Endothelial cell of umbilical vein (primary cell): ENCODE measurements at regions of chr13 and their contacts with region 1.

Region 1: GRCh38 chr13:106619688-106620555 is 52.0 kb upstream of the ARGLU1 start:
- DNase-seq: peak; percentile 61
- H3K4me3 ChIP-seq: no peak overlapping the region
- H3K27ac ChIP-seq: no peak overlapping the region
- H3K4me1 ChIP-seq: peaks cover 9% of the 10 kb centered on the region
- H3K27me3 ChIP-seq: peaks cover 18 to 31% of the 10 kb centered on the region in 2 experiments
- CTCF ChIP-seq: peak; percentile 79 to 80
- POLR2A ChIP-seq: no peak

Region 2: GRCh38 chr13:105894697-105895096 is 725.2 kb before region 1 on chr13:
- CTCF ChIA-PET with region 1: no interaction called
- POLR2A ChIA-PET with region 1: no interaction called
- dilution Hi-C with region 1: no loop called
- intact Hi-C with region 1: no loop called
- DNase-seq: no peak
- H3K4me3 ChIP-seq: no peak overlapping the region
- H3K27ac ChIP-seq: no peak overlapping the region
- H3K4me1 ChIP-seq: no peaks in the 10 kb centered on the region
- H3K27me3 ChIP-seq: no peaks in the 10 kb centered on the region
- CTCF ChIP-seq: no peak
- POLR2A ChIP-seq: no peak

Region 3: GRCh38 chr13:106471957-106472543 is 147.9 kb before region 1 on chr13:
- CTCF ChIA-PET with region 1: no interaction called
- POLR2A ChIA-PET with region 1: no interaction called
- dilution Hi-C with region 1: no loop called
- intact Hi-C with region 1: no loop called
- DNase-seq: peak; percentile 77
- H3K4me3 ChIP-seq: no peak overlapping the region
- H3K27ac ChIP-seq: no peak overlapping the region
- H3K4me1 ChIP-seq: peaks cover 8% of the 10 kb centered on the region
- H3K27me3 ChIP-seq: no peaks in the 10 kb centered on the region
- CTCF ChIP-seq: no peak
- POLR2A ChIP-seq: no peak

Region 4: GRCh38 chr13:106567474-106568298 is 52.2 kb before region 1 on chr13 and contains the start of gene ARGLU1:
- CTCF ChIA-PET with region 1: interaction called, 29 read pairs
- POLR2A ChIA-PET with region 1: no interaction called
- dilution Hi-C with region 1: no loop called
- intact Hi-C with region 1: loop called (anchors 1 kb)
- DNase-seq: peak; percentile 96
- H3K4me3 ChIP-seq: peak within 1 kb of the TSS; percentile 57 to 98 (median 79)
- H3K27ac ChIP-seq: peak within 1 kb of the TSS; percentile 85
- H3K4me1 ChIP-seq: peaks cover 26% of the 10 kb centered on the region
- H3K27me3 ChIP-seq: no peaks in the 10 kb centered on the region
- CTCF ChIP-seq: no peak
- POLR2A ChIP-seq: peak; percentile 92
- total RNA-seq, gene ARGLU1: 95.7 and 111 TPM in 2 replicates

Region 5: GRCh38 chr13:106630650-106631049 is 10.7 kb after region 1 on chr13:
- CTCF ChIA-PET with region 1: interaction called, 23 read pairs
- POLR2A ChIA-PET with region 1: no interaction called
- dilution Hi-C with region 1: no loop called
- intact Hi-C with region 1: no loop called
- DNase-seq: no peak
- H3K4me3 ChIP-seq: no peak overlapping the region
- H3K27ac ChIP-seq: no peak overlapping the region
- H3K4me1 ChIP-seq: no peaks in the 10 kb centered on the region
- H3K27me3 ChIP-seq: peaks cover 1 to 8% of the 10 kb centered on the region in 2 experiments
- CTCF ChIP-seq: no peak
- POLR2A ChIP-seq: no peak

Region 6: GRCh38 chr13:106651442-106651841 is 31.5 kb after region 1 on chr13:
- CTCF ChIA-PET with region 1: no interaction called
- POLR2A ChIA-PET with region 1: no interaction called
- dilution Hi-C with region 1: no loop called
- intact Hi-C with region 1: loop called (anchors 2 kb)
- DNase-seq: peak; percentile 80
- H3K4me3 ChIP-seq: no peak overlapping the region
- H3K27ac ChIP-seq: peak overlapping the region; percentile 63
- H3K4me1 ChIP-seq: peaks cover 13% of the 10 kb centered on the region
- H3K27me3 ChIP-seq: no peaks in the 10 kb centered on the region
- CTCF ChIP-seq: no peak
- POLR2A ChIP-seq: no peak

Region 7: GRCh38 chr13:107124129-107124718 is 504.3 kb after region 1 on chr13:
- CTCF ChIA-PET with region 1: interaction called, 5 read pairs
- POLR2A ChIA-PET with region 1: no interaction called
- dilution Hi-C with region 1: no loop called
- intact Hi-C with region 1: loop called (anchors 2 kb)
- DNase-seq: peak; percentile 54
- H3K4me3 ChIP-seq: no peak overlapping the region
- H3K27ac ChIP-seq: no peak overlapping the region
- H3K4me1 ChIP-seq: no peaks in the 10 kb centered on the region
- H3K27me3 ChIP-seq: no peaks in the 10 kb centered on the region
- CTCF ChIP-seq: peak; percentile 20 to 22
- POLR2A ChIP-seq: no peak